ENCODE measurements at regions of chr17 and their contacts with region 1.

Region 1: DNA sequence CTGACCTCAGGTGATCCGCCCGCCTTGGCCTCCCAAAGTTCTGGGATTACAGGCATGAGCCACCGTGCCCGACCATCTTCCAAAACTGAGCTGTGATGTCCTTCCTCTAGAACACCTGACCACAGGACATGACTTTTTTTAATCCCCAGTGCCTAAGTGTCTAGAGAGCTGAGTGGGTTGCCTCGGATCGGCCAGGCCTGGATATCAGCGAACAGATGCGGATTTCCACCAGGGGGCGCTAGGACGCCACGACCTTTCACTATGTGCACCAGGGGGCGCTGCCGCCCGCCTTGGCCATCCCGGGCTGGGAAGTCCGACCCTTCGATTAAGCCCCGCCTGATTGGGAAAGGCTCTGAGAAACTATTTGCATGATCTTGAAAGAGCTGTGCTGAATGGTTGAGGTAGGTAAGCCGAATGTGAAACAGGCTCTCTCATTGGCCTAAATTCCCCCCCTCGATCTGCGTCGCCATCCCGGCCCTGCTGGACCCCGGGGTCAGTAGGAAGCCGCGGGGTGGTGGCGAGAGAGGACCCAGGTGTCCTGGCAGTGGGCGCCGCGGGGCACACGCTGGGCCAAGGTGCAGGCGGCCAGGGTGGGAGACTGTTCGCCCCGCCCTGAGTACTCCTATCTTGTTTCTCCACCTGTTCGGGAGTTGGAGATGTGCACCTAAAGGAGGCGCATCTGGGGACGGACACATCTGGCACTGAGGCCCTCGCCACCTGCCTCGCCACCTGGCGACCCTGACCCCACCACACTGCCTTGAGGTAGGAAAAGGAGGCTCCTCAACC is at the start of gene ACBD4:
- DNase-seq: peak; percentile 95
- CTCF ChIP-seq: peak; percentile 100

Region 2: DNA sequence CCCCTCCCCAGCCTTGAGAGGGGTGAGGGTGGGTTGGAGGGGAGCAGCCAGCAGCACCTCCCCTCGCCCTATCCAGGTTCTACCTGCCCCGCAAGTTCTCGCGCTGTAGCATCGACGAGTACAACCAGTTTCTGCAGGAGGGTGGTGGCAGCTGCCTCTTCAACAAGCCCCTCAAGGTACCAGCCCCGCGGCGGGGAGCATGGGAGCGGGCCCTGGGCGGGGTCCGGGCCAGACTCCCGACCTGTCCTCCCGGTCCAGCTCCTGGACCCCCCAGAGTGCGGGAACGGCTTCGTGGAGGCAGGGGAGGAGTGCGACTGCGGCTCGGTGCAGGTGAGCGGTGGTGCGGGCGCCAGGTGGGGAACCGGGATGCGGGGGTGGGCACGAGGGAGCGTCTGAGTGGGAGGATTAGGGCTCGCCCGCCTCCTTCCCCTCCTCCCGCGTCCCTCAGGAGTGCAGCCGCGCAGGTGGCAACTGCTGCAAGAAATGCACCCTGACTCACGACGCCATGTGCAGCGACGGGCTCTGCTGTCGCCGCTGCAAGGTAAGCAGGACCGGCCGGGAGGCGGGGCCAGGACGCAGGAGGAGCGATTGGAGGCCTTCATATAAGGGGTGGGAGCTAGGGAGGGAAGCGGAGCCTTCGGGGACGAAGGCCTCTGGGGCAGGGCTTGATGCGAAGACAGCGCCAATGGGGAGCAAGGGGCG is 360.1 kb before region 1 on chr17:
- CTCF ChIA-PET with region 1: interaction called, 10 read pairs
- POLR2A ChIA-PET with region 1: no interaction called
- DNase-seq: peak; percentile 99
- CTCF ChIP-seq: no peak

Region 3: DNA sequence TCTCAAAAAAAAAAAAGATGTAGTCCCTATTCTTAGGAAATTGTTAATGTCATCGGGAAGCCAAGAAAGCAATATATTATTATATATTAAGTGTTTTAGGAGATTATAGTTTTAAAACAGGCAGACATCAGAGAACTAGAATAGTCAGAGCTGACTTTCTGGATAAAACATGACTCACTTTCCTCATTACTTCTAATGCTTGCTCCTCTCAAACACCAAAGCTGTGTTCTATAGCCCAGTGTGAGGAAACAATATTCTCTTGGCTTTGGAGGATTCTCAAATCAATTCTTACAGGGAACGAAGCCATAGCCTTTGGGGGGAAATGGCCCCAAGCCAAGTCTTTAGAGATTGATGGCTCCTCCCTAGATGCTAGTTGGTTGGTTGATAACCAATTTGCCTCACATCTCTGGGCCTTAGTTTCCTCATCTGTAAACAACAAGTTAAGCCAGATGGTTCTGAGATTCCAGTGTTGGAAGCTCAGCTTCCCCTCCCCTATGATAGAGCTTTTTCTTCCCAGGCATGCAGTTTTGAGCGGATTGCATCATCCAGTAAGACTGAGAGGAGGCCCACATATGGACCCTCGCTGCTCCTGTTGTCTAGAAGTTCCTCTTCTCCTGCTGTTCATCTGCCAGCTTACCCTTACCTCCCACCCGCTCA is 61.8 kb before region 1 on chr17:
- CTCF ChIA-PET with region 1: interaction called, 15 read pairs
- POLR2A ChIA-PET with region 1: no interaction called
- DNase-seq: no peak
- CTCF ChIP-seq: no peak

Region 4: GRCh38 chr17:45148183-45149036 is 13.0 kb after region 1 on chr17 and contains the start of gene HEXIM1:
- CTCF ChIA-PET with region 1: interaction called, 190 read pairs
- POLR2A ChIA-PET with region 1: interaction called, 48 read pairs
- DNase-seq: peak; percentile 96
- CTCF ChIP-seq: no peak

Region 5: GRCh38 chr17:45184144-45184543 is 48.8 kb after region 1 on chr17:
- CTCF ChIA-PET with region 1: interaction called, 316 read pairs
- POLR2A ChIA-PET with region 1: no interaction called
- DNase-seq: no peak
- CTCF ChIP-seq: no peak

Region 6: GRCh38 chr17:45228763-45229539 is 93.6 kb after region 1 on chr17:
- CTCF ChIA-PET with region 1: interaction called, 56 read pairs
- POLR2A ChIA-PET with region 1: no interaction called
- DNase-seq: peak; percentile 86
- CTCF ChIP-seq: no peak